Transverse colon (tissue), 4 donors: ENCODE measurements at regions of chr1 and their contacts with region 1.

Region 1: GRCh38 chr1:67561704-67562113 is 123.3 kb upstream of the GADD45A start:
- DNase-seq: peak; percentile 97
- H3K4me3 ChIP-seq: no peak overlapping the region
- H3K27ac ChIP-seq: peak overlapping the region; percentile 28 to 31 (median 30)
- H3K4me1 ChIP-seq: peaks cover 0 to 24% (median 11%) of the 10 kb centered on the region in 4 donors
- H3K27me3 ChIP-seq: no peaks in the 10 kb centered on the region
- CTCF ChIP-seq: peak; percentile 79 to 94 (median 88)
- EP300 ChIP-seq: no peak
- POLR2A ChIP-seq: peak; percentile 10

Region 2: DNA sequence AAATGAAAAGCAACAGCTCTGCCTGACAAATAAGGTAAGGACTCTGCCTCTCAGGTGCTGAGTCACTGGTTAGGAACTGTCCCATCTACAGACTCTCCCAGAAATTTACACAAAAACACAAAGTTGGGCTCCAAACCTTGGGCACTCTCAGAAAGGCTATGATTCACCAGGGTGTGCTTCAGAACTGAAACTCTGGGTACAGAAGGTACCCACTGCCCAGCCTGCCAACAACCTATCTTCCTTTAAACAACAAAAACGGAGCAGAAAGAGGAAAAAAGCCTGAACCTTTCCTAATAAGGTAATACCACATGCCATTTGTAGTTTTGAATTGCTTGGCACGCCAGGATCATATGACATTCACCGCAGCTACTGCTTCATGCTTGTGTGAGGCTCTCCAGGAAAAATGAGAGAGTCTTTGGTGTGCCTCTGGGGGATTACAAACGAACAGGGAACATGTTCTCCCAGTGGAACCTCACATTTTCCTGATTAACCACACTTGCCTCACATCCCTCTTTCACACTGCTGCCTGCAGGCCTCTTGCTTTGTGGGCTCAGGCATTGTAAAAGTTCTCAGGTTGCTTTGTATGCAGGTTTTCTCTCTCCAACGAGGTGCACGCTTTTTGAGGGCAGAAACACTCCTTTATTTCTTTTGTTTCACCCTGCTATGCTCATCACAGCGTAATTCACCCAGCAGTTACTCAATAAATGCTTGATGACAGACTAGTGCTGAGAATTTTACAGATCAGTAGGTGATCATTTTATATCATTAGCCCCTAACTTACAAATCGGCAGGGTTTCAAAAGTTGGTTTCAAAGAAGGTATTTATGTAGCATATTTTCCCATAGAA is 188.4 kb after region 1 on chr1:
- in situ Hi-C with region 1: loop called in 1 of 4 experiments (anchors 10 kb)
- intact Hi-C with region 1: no loop called
- DNase-seq: no peak
- H3K4me3 ChIP-seq: no peak overlapping the region
- H3K27ac ChIP-seq: peak overlapping the region; percentile 79 to 84 (median 82)
- H3K4me1 ChIP-seq: peaks cover 31 to 55% (median 39%) of the 10 kb centered on the region in 4 donors
- H3K27me3 ChIP-seq: no peaks in the 10 kb centered on the region
- CTCF ChIP-seq: no peak
- EP300 ChIP-seq: no peak
- POLR2A ChIP-seq: no peak

Region 3: DNA sequence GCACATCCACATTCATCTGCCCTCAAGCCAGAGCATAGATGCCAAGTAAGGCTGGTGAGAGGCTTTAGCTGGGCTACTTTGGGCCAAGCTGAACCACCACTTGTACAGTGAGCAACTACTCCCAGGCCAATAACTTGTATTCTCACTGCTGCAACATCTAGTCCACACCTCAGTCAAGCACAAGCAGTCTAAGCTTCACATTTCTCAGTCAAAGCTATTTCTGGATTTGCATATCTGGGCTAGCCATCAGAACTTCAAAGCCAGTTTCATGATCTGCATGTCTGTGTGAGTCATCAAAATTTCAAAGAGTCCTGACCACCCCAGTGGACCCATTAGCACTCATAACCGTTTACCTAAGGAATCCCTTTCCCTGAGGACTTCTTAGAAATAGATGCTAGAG is 566.4 kb after region 1 on chr1:
- in situ Hi-C with region 1: no loop called
- intact Hi-C with region 1: no loop called
- DNase-seq: no peak
- H3K4me3 ChIP-seq: no peak overlapping the region
- H3K27ac ChIP-seq: peak overlapping the region in 2 of 4 donors; percentile 25 to 57
- H3K4me1 ChIP-seq: peaks cover 0 to 11% (median 0%) of the 10 kb centered on the region in 4 donors
- H3K27me3 ChIP-seq: no peaks in the 10 kb centered on the region
- CTCF ChIP-seq: no peak
- EP300 ChIP-seq: no peak
- POLR2A ChIP-seq: no peak